Tibial artery (tissue), 4 donors: ENCODE measurements at regions of chr11 and their contacts with region 1.

Region 1: GRCh38 chr11:76207642-76208401 is 1.5 kb upstream of the WNT11 start:
- DNase-seq: peak; percentile 76 to 83
- H3K4me3 ChIP-seq: peak overlapping the region; percentile 52 to 63
- H3K27ac ChIP-seq: peak overlapping the region in 1 of 2 donors; percentile 50
- H3K4me1 ChIP-seq: peaks cover 4 to 58% (median 48%) of the 10 kb centered on the region in 4 donors
- H3K27me3 ChIP-seq: peaks cover 0 to 14% of the 10 kb centered on the region in 2 donors
- CTCF ChIP-seq: peak; percentile 95 to 98

Region 2: GRCh38 chr11:76235233-76236091 is 27.6 kb after region 1 on chr11:
- intact Hi-C with region 1: loop called (anchors 2 kb)
- DNase-seq: peak; percentile 91 to 95
- H3K4me3 ChIP-seq: peak overlapping the region; percentile 77 to 83
- H3K27ac ChIP-seq: peak overlapping the region; percentile 83 to 86
- H3K4me1 ChIP-seq: peaks cover 0 to 18% (median 12%) of the 10 kb centered on the region in 4 donors
- H3K27me3 ChIP-seq: peaks cover 0 to 2% of the 10 kb centered on the region in 2 donors
- CTCF ChIP-seq: no peak

Region 3: DNA sequence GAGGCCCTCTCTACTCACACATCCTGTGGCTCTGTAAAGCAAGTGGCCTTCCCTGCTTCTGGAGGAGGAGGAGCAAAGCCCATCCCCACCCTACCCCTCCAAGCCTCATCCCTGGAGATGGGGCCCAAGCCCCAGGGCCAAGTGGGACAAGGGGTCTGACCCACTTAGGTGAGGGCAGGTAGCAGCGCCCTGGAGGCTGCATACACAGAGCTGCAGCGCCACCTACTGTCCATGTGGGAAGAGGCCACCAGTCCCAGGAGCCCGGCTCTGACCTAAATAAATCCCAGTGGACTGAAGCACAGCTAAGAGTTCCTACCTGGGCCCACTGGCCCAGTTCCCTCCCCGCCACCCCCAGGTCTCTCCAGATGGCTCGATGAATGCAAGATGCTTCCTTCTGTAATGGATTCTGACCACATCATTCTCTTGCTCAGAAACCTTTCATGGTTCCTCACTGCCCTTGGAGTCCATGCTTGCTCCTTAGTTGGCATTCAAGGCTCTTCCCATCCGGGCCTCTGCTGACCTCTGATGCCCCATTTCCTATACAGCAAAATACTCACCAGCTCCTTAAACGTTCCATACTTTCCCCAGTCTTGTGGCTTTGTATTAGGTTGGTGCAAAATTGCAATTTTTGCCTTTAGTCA is 111.0 kb after region 1 on chr11:
- intact Hi-C with region 1: loop called (anchors 2 kb)
- DNase-seq: peak; percentile 80 to 83
- H3K4me3 ChIP-seq: no peak overlapping the region
- H3K27ac ChIP-seq: no peak overlapping the region
- H3K4me1 ChIP-seq: peaks cover 0 to 10% (median 3%) of the 10 kb centered on the region in 4 donors
- H3K27me3 ChIP-seq: peaks cover 0 to 29% of the 10 kb centered on the region in 2 donors
- CTCF ChIP-seq: peak; percentile 93

Region 4: DNA sequence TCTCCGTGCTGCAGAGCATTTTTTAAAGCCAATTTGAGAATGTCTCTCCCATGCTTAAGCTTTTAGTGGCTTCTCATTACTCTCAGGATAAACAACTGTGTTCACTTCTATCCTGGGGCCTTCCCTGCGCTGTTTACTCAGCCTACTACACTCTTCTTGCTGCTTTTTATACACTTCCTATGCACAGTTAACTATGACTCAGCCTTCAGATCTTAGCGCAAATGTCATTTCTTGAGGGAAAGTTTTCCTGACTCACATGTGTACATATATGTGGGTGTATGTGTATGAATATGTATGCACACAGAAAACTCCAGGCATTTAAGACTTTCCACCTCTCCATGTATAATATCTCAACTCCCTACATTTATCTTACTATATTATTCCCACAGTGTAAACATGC is 163.3 kb after region 1 on chr11:
- intact Hi-C with region 1: loop called (anchors 5 kb)
- DNase-seq: no peak
- H3K4me3 ChIP-seq: no peak overlapping the region
- H3K27ac ChIP-seq: no peak overlapping the region
- H3K4me1 ChIP-seq: peaks cover 0 to 57% (median 12%) of the 10 kb centered on the region in 4 donors
- H3K27me3 ChIP-seq: no peaks in the 10 kb centered on the region
- CTCF ChIP-seq: no peak